GM12878 (cell line): ENCODE measurements at regions of chr17 and their contacts with region 1.

Region 1: DNA sequence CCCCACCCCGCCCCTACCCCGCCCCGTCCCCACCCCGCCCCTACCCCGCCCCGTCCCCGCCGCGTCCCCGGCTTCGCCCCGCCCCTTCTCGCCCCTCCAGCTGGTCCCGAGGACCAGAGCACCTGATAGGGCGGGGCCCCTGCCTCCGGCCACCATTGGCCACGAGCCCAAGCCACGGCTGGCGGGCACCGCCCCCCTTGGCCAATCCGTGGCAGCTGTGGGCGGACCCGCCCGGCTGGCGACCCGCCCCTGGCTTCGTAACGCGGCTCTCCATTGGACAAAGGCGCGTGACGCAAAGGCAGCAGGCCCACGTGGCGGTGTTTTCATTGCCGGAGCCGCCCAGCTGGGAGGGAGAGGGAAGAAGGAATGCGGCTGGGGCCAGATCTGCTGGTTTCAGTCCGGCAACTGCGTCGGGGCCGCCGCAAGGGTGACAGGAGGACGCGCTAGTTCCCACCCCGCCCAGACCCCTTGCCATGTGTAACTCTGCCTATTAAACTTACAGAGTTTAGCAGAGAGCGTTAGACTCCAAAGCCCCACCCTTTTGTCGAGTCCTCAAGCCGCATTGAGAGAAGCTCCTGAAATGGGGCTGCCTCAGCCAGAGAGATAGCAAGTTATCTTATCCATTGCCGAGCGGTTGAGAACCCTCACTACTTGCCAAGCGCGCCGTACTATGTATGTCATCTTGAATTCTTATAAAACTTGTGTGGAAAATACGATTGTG is 403 bp upstream of the WIPI1 start:
- DNase-seq: peak; percentile 91
- ATAC-seq: peak; percentile 83
- H3K4me3 ChIP-seq: peak overlapping the region; percentile 67
- H3K27ac ChIP-seq: peak overlapping the region; percentile 78
- H3K4me1 ChIP-seq: peaks cover 37% of the 10 kb centered on the region
- H3K27me3 ChIP-seq: no peaks in the 10 kb centered on the region
- CTCF ChIP-seq: no peak
- EP300 ChIP-seq: no peak
- POLR2A ChIP-seq: peak; percentile 89
- RAD21 ChIP-seq: no peak

Region 2: DNA sequence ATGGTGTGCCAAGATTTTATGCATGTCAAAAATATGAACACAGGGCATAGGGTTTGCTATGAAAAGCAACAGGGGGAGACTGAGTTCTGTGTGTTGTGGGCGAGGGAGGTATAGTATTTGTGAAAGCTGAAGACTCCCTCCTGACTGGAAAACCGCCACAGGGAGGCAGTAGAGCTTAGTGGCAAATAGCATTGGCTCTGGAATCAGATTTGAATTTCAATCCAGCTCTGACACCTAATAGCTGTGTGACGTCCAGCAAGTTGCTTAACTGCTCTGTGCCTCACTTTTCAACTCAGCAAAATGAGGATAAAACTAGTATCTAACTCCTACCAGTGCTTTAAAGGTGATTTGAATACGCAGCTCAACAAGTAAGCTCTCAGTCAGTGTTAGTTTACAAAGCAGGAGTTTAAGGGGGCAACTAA is 400.2 kb before region 1 on chr17:
- CTCF ChIA-PET with region 1: interaction called, 6 read pairs
- POLR2A ChIA-PET with region 1: no interaction called
- RAD21 ChIA-PET with region 1: interaction called, 3 read pairs
- SMC1A ChIA-PET with region 1: interaction called, 6 read pairs
- in situ Hi-C with region 1: no loop called
- intact Hi-C with region 1: loop called (anchors 2 kb)
- DNase-seq: no peak
- ATAC-seq: peak; percentile 74
- H3K4me3 ChIP-seq: no peak overlapping the region
- H3K27ac ChIP-seq: no peak overlapping the region
- H3K4me1 ChIP-seq: peaks cover 9% of the 10 kb centered on the region
- H3K27me3 ChIP-seq: no peaks in the 10 kb centered on the region
- CTCF ChIP-seq: peak; percentile 31 to 58 (median 50)
- EP300 ChIP-seq: no peak
- POLR2A ChIP-seq: no peak
- RAD21 ChIP-seq: peak; percentile 25; the same call in 1 of the 2 replicates

Region 3: DNA sequence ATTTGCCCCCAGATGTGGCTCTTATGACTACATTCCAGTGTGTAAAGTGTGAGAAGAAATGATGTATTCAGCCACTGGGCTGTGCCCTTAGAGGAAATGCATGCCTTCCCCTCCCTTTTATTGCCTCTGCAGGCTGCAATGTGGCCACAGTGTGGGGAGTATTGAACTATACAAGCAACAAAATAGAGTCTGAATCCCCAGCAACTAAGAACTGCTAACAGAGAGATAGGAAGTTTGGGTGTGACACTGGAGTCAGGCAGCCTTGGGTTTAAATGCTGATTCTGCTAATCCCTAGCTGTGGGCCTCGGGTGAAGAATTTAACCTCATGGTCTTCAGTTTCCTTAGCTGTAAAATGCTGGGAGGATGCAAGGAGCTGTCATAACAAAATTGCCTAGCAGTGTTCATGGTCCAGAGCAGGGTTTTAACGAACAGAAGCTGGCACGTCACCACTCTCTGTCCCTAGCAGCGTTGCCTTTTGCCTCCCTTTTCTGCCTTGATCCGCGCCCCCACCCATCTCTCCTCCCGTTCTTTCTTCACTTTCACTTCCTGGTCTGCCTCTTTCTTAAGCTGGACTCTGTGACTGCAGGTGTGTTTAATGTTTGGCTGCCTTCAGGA is 371.8 kb before region 1 on chr17:
- CTCF ChIA-PET with region 1: no interaction called
- POLR2A ChIA-PET with region 1: no interaction called
- RAD21 ChIA-PET with region 1: no interaction called
- SMC1A ChIA-PET with region 1: no interaction called
- in situ Hi-C with region 1: no loop called
- intact Hi-C with region 1: no loop called
- DNase-seq: no peak
- ATAC-seq: peak; percentile 71
- H3K4me3 ChIP-seq: no peak overlapping the region
- H3K27ac ChIP-seq: no peak overlapping the region
- H3K4me1 ChIP-seq: peaks cover 29% of the 10 kb centered on the region
- H3K27me3 ChIP-seq: no peaks in the 10 kb centered on the region
- CTCF ChIP-seq: no peak
- EP300 ChIP-seq: no peak
- POLR2A ChIP-seq: no peak
- RAD21 ChIP-seq: no peak

Region 4: DNA sequence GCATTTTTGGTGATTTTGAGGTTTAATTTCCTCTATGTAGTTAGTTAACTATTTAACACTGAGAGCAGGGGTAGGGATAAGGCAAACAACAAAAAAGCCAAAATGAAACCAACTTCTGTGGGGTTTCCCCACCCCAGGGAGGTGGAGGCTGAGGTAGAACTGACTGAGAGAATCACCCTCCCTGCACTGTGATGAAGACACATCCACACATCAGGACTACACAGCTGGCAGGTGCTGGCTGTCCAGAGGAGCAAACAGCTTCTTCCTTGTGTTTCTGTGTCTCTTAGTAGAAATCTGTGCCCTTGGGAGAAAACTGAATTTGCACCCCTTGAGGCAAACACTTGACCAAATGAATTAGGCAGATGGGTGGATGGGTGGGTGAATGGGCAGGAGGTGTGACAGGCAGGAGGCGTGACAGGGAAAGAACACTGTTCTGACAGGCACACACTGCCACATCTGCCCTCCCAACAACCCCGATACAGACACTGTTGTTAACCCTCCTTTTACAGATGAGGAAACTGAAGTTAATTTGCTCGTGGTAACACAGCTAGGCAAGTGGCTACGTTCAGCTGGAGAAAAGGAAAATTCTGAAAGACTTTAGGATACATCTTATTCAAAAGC is 272.8 kb before region 1 on chr17:
- CTCF ChIA-PET with region 1: interaction called, 21 read pairs
- POLR2A ChIA-PET with region 1: interaction called, 17 read pairs
- RAD21 ChIA-PET with region 1: interaction called, 49 read pairs
- SMC1A ChIA-PET with region 1: interaction called, 39 read pairs
- in situ Hi-C with region 1: loop called (anchors 5 kb)
- intact Hi-C with region 1: no loop called
- DNase-seq: no peak
- ATAC-seq: peak; percentile 74
- H3K4me3 ChIP-seq: peak overlapping the region; percentile 50; the same call in 1 of the 2 replicates
- H3K27ac ChIP-seq: peak overlapping the region; percentile 78
- H3K4me1 ChIP-seq: peaks cover 34% of the 10 kb centered on the region
- H3K27me3 ChIP-seq: no peaks in the 10 kb centered on the region
- CTCF ChIP-seq: no peak
- EP300 ChIP-seq: no peak
- POLR2A ChIP-seq: no peak
- RAD21 ChIP-seq: no peak

Region 5: GRCh38 chr17:68247445-68248198 is 210.1 kb before region 1 on chr17 and contains the start of gene AMZ2:
- CTCF ChIA-PET with region 1: interaction called, 6 read pairs
- POLR2A ChIA-PET with region 1: interaction called, 55 read pairs
- RAD21 ChIA-PET with region 1: interaction called, 24 read pairs
- SMC1A ChIA-PET with region 1: interaction called, 21 read pairs
- in situ Hi-C with region 1: no loop called
- intact Hi-C with region 1: no loop called
- DNase-seq: peak; percentile 81
- ATAC-seq: peak; percentile 92
- H3K4me3 ChIP-seq: peak within 1 kb of the TSS; percentile 85
- H3K27ac ChIP-seq: peak within 1 kb of the TSS; percentile 91
- H3K4me1 ChIP-seq: peaks cover 10% of the 10 kb centered on the region
- H3K27me3 ChIP-seq: no peaks in the 10 kb centered on the region
- CTCF ChIP-seq: no peak
- EP300 ChIP-seq: no peak
- POLR2A ChIP-seq: peak; percentile 95
- RAD21 ChIP-seq: no peak
- polyA plus RNA-seq, gene AMZ2: 127 to 135 TPM

Region 6: DNA sequence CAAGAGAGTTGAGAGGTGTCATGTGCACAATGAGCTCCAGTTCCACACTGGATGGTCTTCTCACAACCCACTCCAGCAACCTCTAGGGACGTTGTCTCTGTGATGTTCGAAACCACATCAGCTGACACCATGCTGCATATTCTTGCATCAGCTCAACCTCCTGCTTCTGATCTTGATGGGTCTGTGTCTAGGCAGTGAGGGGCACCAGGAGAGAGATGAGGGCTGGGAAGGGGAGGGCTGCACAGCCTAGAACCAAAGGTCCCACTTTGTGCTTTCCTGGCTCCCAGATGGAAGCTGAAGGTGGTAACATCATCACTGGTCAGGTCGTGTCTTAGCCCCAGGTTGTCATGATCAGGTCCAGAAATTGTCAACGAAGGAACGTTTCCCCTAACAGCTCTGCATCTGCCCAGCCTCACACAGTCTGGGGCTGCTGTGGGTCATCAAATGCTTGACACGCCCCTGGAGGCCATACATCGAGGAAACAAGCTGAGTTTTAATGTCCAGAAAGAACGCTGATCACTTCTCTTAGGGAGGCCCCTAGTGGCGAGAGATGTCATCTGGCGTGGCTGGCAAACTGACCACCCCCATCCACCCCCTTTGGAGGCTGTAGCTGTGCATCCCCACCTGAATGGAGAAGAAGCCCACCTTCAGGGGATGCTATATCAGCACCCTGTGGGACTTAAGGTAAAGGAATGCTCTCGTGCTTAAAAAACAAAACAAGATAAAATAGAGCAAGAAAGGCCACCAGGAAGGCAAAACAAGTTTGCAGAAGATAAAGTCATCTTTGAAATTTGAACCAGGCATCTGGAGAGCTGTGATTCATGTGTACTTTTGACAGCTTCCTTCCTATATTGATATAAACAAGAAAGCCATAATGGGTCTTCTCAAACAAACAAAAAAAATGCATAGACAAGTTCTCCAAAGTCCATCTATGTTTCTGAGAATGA is 58.7 kb before region 1 on chr17:
- CTCF ChIA-PET with region 1: interaction called, 12 read pairs
- POLR2A ChIA-PET with region 1: no interaction called
- RAD21 ChIA-PET with region 1: interaction called, 7 read pairs
- SMC1A ChIA-PET with region 1: interaction called, 11 read pairs
- in situ Hi-C with region 1: no loop called
- intact Hi-C with region 1: loop called (anchors 2 kb)
- DNase-seq: no peak
- ATAC-seq: peak; percentile 99
- H3K4me3 ChIP-seq: no peak overlapping the region
- H3K27ac ChIP-seq: no peak overlapping the region
- H3K4me1 ChIP-seq: peaks cover 6% of the 10 kb centered on the region
- H3K27me3 ChIP-seq: no peaks in the 10 kb centered on the region
- CTCF ChIP-seq: peak; percentile 84 to 89 (median 88)
- EP300 ChIP-seq: no peak
- POLR2A ChIP-seq: peak; percentile 34; the same call in 1 of the 2 replicates
- RAD21 ChIP-seq: peak; percentile 82